GM13977 (cell line): ENCODE measurements at regions of chrX and their contacts with region 1.

Region 1: DNA sequence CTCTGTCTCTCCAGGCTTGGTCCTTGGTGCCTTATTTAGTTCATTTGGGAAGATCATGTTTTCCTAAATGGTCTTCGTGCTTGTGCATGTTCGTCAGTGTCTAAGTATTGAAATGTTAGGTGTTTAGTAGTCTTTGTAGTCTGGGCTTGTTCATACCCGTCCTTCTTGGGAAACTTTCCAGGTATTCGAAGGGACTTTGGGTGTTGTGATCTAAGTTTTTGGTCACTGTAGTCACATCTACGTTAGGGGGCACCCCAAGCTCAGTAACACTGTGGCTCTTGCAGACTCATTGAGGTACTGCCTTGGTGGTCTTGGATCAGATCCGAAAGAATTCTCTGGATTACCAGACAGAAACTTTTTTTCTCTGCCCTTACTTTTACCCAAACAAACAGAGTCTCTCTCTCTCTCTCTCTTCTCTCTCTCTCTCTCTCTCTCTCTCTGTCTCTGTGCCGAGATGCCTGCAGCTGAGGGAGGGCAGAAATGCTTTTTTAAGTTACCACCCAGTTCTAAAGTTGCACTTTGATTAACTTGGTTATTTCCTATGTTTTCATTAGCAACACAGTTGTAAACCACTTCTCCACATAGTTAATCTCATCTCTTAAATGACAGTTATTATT is 67.6 kb upstream of the SLC7A3 start:
- DNase-seq: no peak
- CTCF ChIP-seq: peak; percentile 48

Region 2: DNA sequence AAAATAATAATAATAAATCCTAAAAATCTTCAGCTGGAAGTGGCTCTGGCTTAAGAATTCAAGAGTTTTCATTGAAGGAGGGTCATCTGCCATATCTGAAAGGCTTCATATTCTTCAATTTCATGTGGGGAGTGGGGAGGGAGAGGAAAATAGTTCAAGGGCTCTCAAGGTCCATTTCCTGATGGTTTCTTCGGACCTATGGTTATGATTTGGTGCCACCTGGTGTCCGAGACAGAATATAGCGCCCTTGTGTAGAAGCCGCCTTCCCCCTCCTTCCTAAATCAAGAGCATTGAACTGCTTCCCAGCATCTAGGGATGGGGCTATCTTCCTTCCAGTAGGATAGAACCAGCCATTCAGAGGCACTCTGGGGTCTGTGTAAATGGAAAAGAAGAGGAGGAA is 180.4 kb after region 1 on chrX:
- in situ Hi-C with region 1: loop called (anchors 10 kb)
- DNase-seq: peak; percentile 64
- CTCF ChIP-seq: peak; percentile 81